Calu3 (cell line): ENCODE measurements at regions of chr14 and their contacts with region 1.

Region 1: GRCh38 chr14:68164711-68165113 is 345.1 kb downstream of the RAD51B start:
- DNase-seq: peak; percentile 20
- H3K4me3 Mint-ChIP-seq: peak overlapping the region; percentile 5
- H3K27ac Mint-ChIP-seq: peak overlapping the region; percentile 89
- H3K4me1 Mint-ChIP-seq: peaks cover 80% of the 10 kb centered on the region
- H3K27me3 Mint-ChIP-seq: no peaks in the 10 kb centered on the region
- CTCF ChIP-seq: no peak

Region 2: GRCh38 chr14:68084256-68084655 is 80.5 kb before region 1 on chr14:
- CTCF ChIA-PET with region 1: interaction called, 3 read pairs
- intact Hi-C with region 1: loop called (anchors 2 kb)
- DNase-seq: peak; percentile 22
- H3K4me3 Mint-ChIP-seq: no peak overlapping the region
- H3K27ac Mint-ChIP-seq: no peak overlapping the region
- H3K4me1 Mint-ChIP-seq: peaks cover 34% of the 10 kb centered on the region
- H3K27me3 Mint-ChIP-seq: no peaks in the 10 kb centered on the region
- CTCF ChIP-seq: peak; percentile 15

Region 3: DNA sequence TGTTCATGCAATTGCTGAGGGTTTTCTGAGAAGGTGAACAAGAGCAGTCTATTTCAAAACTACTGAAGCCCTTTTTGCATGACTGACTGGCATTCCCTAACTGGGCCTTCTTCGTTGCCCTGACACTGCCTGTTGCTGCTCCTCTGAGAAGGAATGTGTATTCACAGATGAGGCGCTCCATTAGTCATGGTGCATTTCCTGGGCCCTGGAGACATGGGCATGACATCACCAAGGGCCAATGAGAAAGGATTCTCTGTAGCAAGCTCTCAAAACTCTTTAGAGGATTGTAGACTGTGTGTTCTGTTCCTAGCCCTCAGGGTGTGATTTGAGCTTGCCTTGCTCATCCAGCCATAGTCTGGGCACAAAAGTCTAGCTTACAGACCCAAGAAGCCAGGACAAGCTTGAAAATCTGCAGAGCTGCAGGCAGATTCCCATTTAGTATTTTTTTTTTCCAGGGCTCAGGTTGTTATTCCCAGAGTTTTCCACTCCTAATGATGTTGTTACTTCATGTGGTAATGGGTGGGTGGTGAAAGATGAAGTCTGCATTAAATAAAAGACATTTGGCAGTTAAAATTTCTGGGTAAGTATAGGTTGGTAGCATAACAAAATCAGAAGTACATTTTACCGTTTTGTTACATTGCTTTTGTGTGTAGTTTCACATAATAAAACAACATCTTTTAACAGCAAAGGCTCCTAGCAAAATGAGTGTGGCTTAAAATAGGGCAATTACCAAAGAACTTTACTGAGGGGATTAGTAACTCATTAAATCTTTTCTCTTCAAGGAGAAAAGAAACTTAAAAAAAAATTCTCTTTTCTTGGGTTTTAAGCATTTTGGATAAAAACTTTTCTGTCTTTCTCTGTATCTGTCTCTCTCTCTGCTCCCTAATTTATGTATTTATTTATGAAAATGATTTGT is 26.8 kb before region 1 on chr14:
- CTCF ChIA-PET with region 1: no interaction called
- intact Hi-C with region 1: loop called (anchors 1 kb)
- DNase-seq: peak; percentile 79
- H3K4me3 Mint-ChIP-seq: no peak overlapping the region
- H3K27ac Mint-ChIP-seq: peak overlapping the region; percentile 89
- H3K4me1 Mint-ChIP-seq: peaks cover 38% of the 10 kb centered on the region
- H3K27me3 Mint-ChIP-seq: no peaks in the 10 kb centered on the region
- CTCF ChIP-seq: no peak

Region 4: DNA sequence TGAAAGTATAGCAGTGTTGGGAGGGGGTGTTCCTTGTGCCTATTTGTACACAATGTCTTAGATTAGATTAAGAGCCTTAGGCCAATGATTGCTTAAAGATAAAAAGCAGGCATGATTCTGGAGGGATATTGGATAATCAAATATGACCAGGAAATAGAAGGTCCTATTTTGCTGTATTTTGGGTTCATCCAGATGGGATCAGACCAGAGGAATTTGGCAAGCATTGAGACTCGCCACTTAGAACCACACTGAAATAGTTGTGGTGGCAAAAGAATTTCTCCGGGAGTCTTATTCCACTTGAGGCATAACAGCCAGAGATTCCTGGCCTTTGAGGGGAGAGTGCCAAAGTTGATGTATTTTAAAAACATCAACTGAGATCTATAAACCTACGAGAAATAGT is 17.9 kb before region 1 on chr14:
- CTCF ChIA-PET with region 1: interaction called, 6 read pairs
- intact Hi-C with region 1: loop called (anchors 2 kb)
- DNase-seq: peak; percentile 35
- H3K4me3 Mint-ChIP-seq: no peak overlapping the region
- H3K27ac Mint-ChIP-seq: peak overlapping the region; percentile 93
- H3K4me1 Mint-ChIP-seq: peaks cover 59% of the 10 kb centered on the region
- H3K27me3 Mint-ChIP-seq: no peaks in the 10 kb centered on the region
- CTCF ChIP-seq: no peak